Activated naive CD4-positive, alpha-beta T cell treated with anti-CD3 and anti-CD28 coated beads for 36 hours (primary cell): ENCODE measurements at regions of chr13 and their contacts with region 1.

Region 1: GRCh38 chr13:36999054-36999714 is at the start of gene ALG5:
- DNase-seq: peak; percentile 90
- H3K4me3 Mint-ChIP-seq: peak within 1 kb of the TSS; percentile 100
- H3K27ac Mint-ChIP-seq: peak within 1 kb of the TSS; percentile 100
- H3K4me1 Mint-ChIP-seq: peaks cover 41% of the 10 kb centered on the region
- H3K27me3 Mint-ChIP-seq: no peaks in the 10 kb centered on the region
- total RNA-seq, gene ALG5: 17.5 to 20.8 TPM

Region 2: DNA sequence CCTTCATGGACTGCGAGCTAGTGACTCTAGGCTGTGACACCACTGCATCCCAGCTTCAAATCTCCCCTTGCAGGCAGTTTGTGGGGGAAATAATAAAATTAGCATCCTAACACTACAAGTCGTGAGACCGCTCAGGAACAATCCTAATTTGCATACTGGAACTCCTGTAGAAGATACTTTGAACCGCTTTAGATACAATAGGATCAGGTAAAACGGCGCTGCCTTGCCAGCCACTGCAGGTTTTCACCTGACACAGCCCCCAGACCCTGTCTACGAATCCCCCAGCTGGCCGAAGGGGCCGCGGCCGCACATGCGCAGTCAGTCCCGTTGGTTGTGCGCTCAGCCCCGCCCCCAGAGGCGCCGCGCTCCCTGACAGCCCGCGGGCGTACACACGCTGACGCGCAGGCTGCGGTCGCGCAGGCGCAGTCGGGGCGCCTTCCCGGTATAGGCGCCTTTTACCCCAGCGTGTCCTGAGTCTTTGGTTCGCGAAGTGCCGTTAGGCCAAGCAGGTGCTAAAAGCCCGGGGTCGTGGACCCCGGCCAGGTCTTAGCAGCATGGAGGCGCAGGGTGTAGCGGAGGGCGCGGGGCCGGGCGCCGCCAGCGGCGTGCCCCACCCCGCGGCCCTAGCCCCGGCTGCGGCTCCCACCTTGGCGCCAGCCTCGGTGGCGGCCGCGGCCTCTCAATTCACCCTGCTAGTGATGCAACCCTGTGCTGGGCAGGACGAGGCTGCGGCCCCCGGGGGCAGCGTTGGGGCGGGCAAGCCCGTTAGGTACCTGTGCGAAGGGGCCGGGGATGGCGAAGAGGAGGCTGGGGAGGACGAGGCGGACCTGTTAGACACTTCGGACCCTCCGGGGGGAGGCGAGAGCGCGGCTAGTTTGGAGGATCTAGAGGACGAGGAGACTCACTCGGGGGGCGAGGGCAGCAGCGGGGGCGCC is 180.1 kb before region 1 on chr13 and contains the start of gene RFXAP:
- CTCF ChIA-PET with region 1: no interaction called
- intact Hi-C with region 1: loop called (anchors 1 kb)
- DNase-seq: peak; percentile 89
- H3K4me3 Mint-ChIP-seq: peak within 1 kb of the TSS; percentile 93
- H3K27ac Mint-ChIP-seq: peak within 1 kb of the TSS; percentile 75
- H3K4me1 Mint-ChIP-seq: peaks cover 45% of the 10 kb centered on the region
- H3K27me3 Mint-ChIP-seq: peaks cover 8% of the 10 kb centered on the region
- total RNA-seq, gene RFXAP: 9.2 to 12.2 TPM

Region 3: DNA sequence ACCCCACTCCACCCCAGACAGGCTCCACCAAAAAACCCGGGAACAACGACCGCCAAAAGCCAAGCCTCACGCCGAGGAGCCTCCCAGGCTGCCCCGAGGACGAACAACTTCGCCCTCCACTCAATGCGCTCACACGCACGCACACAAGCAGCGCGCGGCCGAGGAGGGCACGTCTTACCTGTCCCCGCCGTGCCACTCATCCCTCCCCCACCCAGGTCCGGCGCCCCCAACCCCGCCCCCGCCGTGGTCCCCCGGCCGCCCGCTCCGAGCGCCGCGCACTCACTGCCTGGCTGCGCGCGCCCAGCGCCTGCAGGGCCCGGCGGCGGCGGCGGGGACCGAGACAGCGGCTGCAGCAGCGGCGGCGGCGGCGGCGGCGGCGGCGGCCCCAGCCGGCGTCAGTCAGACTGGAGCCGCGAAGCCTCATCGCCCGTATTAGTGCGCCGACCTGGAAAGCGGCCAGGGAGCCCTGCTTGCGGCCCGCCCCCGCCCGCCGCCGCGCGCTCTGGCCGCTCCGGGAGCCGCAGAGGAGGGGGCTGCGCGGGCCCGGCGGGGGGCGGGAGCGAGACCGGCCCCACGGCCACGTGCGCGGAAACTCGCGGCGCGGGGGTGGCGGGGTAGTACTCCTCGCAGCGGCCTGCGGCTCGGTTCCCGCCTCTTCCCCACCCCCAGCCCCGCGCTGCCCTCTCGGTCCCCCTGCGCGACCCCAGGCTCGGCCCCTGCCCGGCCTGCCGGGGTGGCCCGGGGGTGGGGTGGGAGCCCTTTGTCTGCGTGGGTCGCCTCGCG is 79.2 kb before region 1 on chr13 and contains the start of gene SMAD9:
- CTCF ChIA-PET with region 1: no interaction called
- intact Hi-C with region 1: loop called (anchors 5 kb)
- DNase-seq: peak; percentile 33
- H3K4me3 Mint-ChIP-seq: peak within 1 kb of the TSS; percentile 63
- H3K27ac Mint-ChIP-seq: no peak within 1 kb of the TSS
- H3K4me1 Mint-ChIP-seq: peaks cover 3% of the 10 kb centered on the region
- H3K27me3 Mint-ChIP-seq: peaks cover 53% of the 10 kb centered on the region
- total RNA-seq, gene SMAD9: 0.05 TPM in 1 of 2 experiments, not detected in the other

Region 4: DNA sequence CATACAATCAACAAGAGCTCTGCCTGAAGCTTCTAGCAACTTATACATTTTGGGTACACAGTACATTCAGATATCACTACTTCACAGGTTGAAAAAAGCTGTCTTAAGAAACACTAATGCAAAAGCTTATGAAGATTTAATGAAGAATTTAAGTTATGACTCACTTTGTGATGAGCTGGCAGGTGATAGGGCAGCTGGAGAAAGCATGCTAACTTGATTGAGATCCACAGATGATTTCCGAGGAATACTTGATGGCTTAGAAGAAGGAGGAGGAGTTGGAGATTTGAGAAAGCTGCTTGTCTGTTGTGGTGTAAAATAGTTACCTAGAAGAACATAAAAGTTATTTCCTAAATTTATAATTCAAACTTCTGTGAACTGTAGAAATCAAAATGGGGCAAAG is 24.7 kb after region 1 on chr13:
- CTCF ChIA-PET with region 1: interaction called, 3 read pairs
- intact Hi-C with region 1: loop called (anchors 2 kb)
- DNase-seq: no peak
- H3K4me3 Mint-ChIP-seq: no peak overlapping the region
- H3K27ac Mint-ChIP-seq: no peak overlapping the region
- H3K4me1 Mint-ChIP-seq: peaks cover 2% of the 10 kb centered on the region
- H3K27me3 Mint-ChIP-seq: no peaks in the 10 kb centered on the region

Region 5: DNA sequence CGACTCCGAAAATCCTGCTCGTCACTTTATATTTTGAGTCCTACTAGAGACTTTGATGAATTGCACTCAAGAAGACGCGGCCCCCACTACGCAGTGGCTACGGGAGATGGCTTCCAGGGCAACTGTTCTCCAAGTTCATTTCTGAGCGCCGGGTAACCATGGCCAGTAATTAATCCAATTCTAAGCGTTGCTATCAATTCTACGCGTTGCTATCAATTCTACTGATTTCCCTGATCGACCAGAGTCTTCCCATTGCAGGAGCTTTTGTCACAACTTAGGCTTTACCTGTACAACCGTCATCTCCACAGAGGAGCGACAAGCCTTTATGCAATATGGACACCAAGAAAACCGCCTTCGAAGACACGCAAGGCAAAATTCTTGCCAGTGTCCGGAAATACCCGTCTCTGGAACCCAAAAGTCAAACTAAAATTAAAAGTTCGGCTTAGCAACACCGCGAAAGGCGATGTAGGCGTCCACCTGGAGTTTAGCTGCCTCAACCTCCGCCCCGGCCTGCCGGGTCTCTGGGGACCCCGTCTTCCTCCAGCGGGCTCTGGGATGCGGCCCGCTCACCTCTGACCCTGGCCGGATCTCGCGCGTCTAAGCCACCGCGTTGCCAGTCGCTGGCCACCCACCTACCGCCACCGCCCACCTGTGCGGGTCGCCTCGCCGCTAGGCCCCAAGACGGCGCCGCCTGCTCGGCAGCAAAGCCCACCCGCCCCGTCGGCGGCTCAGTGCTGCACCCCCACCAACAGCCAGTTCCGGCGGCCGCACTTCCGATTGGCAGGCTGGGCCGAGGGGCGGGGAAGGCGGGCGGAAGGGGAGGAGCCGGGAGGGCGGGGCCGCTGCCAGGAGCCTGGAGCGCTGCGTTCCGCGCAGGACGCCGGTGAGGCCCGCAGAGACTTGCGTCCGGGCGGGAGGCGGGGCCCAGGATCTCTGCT is 60.0 kb after region 1 on chr13 and contains the start of gene SUPT20H:
- CTCF ChIA-PET with region 1: interaction called, 4 read pairs
- intact Hi-C with region 1: loop called (anchors 1 kb)
- DNase-seq: peak; percentile 94
- H3K4me3 Mint-ChIP-seq: peak within 1 kb of the TSS; percentile 97
- H3K27ac Mint-ChIP-seq: peak within 1 kb of the TSS; percentile 90
- H3K4me1 Mint-ChIP-seq: peaks cover 33% of the 10 kb centered on the region
- H3K27me3 Mint-ChIP-seq: no peaks in the 10 kb centered on the region
- total RNA-seq, gene SUPT20H: 51.0 to 57.7 TPM

Region 6: GRCh38 chr13:37068962-37069361 is 69.8 kb after region 1 on chr13:
- CTCF ChIA-PET with region 1: no interaction called
- intact Hi-C with region 1: loop called (anchors 2 kb)
- DNase-seq: no peak
- H3K4me3 Mint-ChIP-seq: no peak overlapping the region
- H3K27ac Mint-ChIP-seq: no peak overlapping the region
- H3K4me1 Mint-ChIP-seq: no peaks in the 10 kb centered on the region
- H3K27me3 Mint-ChIP-seq: peaks cover 2% of the 10 kb centered on the region

Region 7: DNA sequence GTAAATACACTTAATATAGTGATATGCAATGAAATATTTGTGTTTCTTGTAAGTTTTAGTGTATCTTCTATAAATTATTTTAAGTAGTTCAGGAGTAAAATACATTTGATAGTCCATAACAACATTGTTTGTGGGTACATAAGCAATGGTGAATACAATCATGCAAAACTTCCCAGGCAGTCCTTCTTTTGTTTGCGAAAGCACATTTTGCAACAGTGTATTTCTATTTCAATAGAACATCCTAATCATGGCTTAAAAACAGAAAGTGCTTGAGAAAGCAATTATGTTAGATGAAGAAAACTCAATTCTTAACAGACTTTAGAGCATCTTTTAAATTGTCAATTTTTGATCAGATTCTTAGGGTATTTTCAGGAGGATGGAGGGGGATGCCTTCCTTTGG is 443.8 kb after region 1 on chr13:
- CTCF ChIA-PET with region 1: no interaction called
- intact Hi-C with region 1: no loop called
- DNase-seq: no peak
- H3K4me3 Mint-ChIP-seq: no peak overlapping the region
- H3K27ac Mint-ChIP-seq: no peak overlapping the region
- H3K4me1 Mint-ChIP-seq: no peaks in the 10 kb centered on the region
- H3K27me3 Mint-ChIP-seq: no peaks in the 10 kb centered on the region